Activated CD8-positive, alpha-beta T cell treated with anti-CD3 and anti-CD28 coated beads, Interleukin-2, amount 10 ng/mL, durations not matched to agents 7 days and 5 days (primary cell): ENCODE measurements at regions of chr16 and their contacts with region 1.

Region 1: GRCh38 chr16:57591086-57591869 is 37.2 kb upstream of the ADGRG1 start:
- DNase-seq: peak; percentile 85
- ATAC-seq: peak; percentile 71
- H3K4me3 Mint-ChIP-seq: peak overlapping the region; percentile 68
- H3K27ac Mint-ChIP-seq: peak overlapping the region; percentile 92
- H3K4me1 Mint-ChIP-seq: peaks cover 77% of the 10 kb centered on the region
- H3K27me3 Mint-ChIP-seq: no peaks in the 10 kb centered on the region

Region 2: DNA sequence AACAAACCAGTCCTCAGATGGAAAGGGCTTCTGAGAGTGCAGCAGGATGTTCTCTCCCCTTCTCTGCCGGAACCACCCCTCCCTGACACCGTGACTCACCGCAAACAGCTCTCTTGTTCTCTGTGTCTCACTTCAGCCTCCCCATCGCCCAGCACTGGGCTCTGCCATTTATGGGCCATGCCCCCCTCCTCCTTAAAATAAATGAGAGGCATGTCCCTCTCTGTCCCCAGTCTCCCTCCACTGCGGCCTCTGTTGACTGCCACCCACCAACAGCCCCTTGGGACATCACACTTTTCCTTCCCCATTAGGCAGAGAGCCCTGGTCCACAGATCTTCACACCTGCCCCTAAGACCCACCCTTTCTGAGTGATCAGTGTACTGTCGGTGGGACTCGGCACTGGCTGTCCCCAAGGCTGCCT is 61.2 kb before region 1 on chr16:
- CTCF ChIA-PET with region 1: no interaction called
- POLR2A ChIA-PET with region 1: no interaction called
- DNase-seq: peak; percentile 88
- ATAC-seq: peak; percentile 91
- H3K4me3 Mint-ChIP-seq: peak overlapping the region; percentile 71
- H3K27ac Mint-ChIP-seq: peak overlapping the region; percentile 99
- H3K4me1 Mint-ChIP-seq: peaks cover 65% of the 10 kb centered on the region
- H3K27me3 Mint-ChIP-seq: no peaks in the 10 kb centered on the region

Region 3: GRCh38 chr16:57653936-57654335 is 62.7 kb after region 1 on chr16:
- CTCF ChIA-PET with region 1: interaction called, 128 read pairs
- POLR2A ChIA-PET with region 1: interaction called, 33 read pairs
- DNase-seq: no peak
- ATAC-seq: no peak
- H3K4me3 Mint-ChIP-seq: no peak overlapping the region
- H3K27ac Mint-ChIP-seq: no peak overlapping the region
- H3K4me1 Mint-ChIP-seq: peaks cover 45% of the 10 kb centered on the region
- H3K27me3 Mint-ChIP-seq: no peaks in the 10 kb centered on the region

Region 4: DNA sequence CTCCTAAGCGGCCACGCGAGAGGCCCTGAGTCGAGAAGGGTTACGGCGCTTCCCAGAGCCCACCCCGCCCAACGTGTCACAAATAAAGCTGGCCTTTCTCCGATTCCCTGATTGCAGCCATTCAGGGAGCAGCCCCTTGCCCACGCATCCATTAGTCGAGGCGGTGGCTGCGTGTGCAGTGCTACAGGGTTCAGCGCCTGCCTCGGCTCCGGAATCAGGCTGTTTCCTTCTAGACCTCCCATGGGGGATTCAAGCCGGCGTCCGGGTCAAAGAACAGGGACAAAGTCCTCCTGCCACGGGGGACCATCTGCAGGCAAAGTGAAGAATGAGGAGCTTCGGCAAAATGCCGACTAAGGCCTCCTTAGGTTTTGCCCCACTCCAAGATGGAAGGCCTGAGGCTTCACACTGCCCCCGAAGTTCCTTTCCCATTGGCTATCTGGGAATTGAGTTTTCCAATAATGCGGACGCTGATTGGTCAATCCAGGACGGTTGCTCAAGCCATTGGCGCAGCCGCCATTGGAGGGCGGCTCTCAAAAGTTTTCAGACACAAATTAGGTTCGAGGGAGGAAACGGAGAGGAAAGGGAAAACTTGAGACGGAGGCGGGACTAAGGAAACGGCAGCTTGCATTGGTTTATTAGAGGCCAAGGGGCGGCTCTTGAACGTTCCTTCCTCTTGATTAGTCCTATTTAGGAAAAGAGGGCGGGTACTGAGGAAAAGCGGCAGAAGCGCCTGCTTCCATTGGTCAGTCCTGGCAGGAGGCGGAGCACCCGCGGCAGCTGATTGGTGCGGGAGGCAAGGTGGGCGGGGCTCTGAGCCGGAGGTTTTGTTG is 143.9 kb after region 1 on chr16:
- CTCF ChIA-PET with region 1: interaction called, 14 read pairs
- POLR2A ChIA-PET with region 1: interaction called, 6 read pairs
- DNase-seq: peak; percentile 99
- ATAC-seq: peak; percentile 92
- H3K4me3 Mint-ChIP-seq: peak overlapping the region; percentile 90
- H3K27ac Mint-ChIP-seq: peak overlapping the region; percentile 94
- H3K4me1 Mint-ChIP-seq: peaks cover 33% of the 10 kb centered on the region
- H3K27me3 Mint-ChIP-seq: no peaks in the 10 kb centered on the region